GM12878 (cell line): ENCODE measurements at regions of chr11 and their contacts with region 1.

Region 1: DNA sequence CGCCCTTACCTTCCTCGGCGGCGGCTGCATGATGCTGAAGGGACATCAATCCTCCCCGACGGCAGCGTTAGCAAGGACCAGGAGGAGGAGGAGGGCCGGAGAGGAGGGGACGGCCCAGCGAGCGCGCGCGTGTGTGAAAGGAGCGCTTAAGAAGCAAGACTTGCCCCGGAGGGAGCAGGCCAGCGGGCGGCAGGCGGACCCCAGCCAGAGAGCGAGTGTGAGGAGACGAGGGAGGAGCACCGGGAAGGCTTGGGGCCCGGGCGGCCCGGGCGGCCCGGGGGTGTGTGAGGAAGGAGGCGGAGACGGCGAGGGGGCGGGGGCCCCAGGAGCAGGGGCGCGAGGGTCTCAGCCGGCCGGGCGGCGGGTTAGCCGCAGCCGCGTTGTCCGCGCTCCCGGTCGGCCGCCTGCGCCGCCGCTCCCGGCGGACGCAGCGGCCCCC is 251 bp downstream of the FCHSD2 start:
- DNase-seq: no peak
- ATAC-seq: peak; percentile 25
- H3K4me3 ChIP-seq: peak overlapping the region; percentile 90
- H3K27ac ChIP-seq: peak overlapping the region; percentile 99
- H3K4me1 ChIP-seq: peaks cover 36% of the 10 kb centered on the region
- H3K27me3 ChIP-seq: no peaks in the 10 kb centered on the region
- CTCF ChIP-seq: 0 out of 6 replicates have a peak, but pooled peaks of 1 of the 3 experiments have one; percentile 0
- EP300 ChIP-seq: no peak
- POLR2A ChIP-seq: peak; percentile 65
- RAD21 ChIP-seq: no peak

Region 2: DNA sequence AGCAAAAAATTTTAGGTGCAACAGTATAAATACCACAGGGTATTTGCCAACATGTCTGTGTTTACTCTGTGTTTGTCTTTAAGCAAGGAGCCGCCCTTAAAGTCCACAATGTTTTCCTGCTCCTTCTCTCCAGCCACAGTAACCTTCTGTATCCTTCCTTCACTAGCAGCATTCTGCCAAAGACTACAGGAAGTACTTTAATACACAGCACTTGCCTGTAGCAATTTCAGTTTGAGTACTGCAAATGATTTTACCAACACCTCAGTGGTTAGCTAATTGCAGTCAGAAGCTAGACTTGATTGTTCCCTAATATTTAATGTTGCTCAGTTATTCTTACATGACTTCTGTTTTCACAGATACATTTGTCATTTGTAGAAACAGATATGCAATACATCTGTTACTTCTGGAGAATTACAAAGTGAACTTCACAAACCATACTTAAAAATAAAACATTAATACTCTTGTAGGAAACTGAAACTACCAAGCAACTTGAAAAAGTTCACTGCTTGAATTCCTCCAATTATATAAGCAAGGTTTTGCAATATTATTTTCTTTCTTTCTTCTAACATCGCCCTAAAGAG is 68.9 kb before region 1 on chr11:
- CTCF ChIA-PET with region 1: interaction called, 3 read pairs
- POLR2A ChIA-PET with region 1: no interaction called
- RAD21 ChIA-PET with region 1: interaction called, 8 read pairs
- SMC1A ChIA-PET with region 1: interaction called, 5 read pairs
- in situ Hi-C with region 1: no loop called
- intact Hi-C with region 1: loop called (anchors 5 kb)
- DNase-seq: peak; percentile 72
- ATAC-seq: peak; percentile 89
- H3K4me3 ChIP-seq: peak overlapping the region; percentile 41
- H3K27ac ChIP-seq: peak overlapping the region; percentile 71
- H3K4me1 ChIP-seq: peaks cover 15% of the 10 kb centered on the region; the same call in 1 of the 2 replicates
- H3K27me3 ChIP-seq: no peaks in the 10 kb centered on the region
- CTCF ChIP-seq: no peak
- EP300 ChIP-seq: peak; percentile 65 to 70; a peak in 2 of 4 replicates
- POLR2A ChIP-seq: 0 out of 2 replicates have a peak, but pooled peaks have one; percentile 31
- RAD21 ChIP-seq: no peak

Region 3: DNA sequence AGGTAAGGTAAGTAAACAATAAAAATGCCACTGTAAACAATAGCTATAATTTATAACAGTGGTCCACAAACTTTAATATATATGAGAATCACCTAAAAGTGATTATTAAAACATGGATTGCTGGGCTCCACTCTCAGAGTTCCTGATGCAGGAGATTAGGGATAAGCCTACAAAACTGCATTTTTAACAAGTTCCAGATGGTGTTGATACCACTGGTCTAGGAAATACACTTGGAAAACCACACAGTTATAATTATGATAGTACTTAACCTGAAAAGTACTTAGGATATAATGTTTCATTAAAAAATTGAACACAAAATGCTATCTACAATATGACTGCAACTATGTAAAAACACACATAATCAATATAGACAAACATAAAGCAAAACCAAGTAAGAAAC is 20.2 kb before region 1 on chr11:
- CTCF ChIA-PET with region 1: interaction called, 16 read pairs
- POLR2A ChIA-PET with region 1: interaction called, 4 read pairs
- RAD21 ChIA-PET with region 1: interaction called, 4 read pairs
- SMC1A ChIA-PET with region 1: interaction called, 47 read pairs
- in situ Hi-C with region 1: no loop called
- intact Hi-C with region 1: no loop called
- DNase-seq: no peak
- ATAC-seq: no peak
- H3K4me3 ChIP-seq: no peak overlapping the region
- H3K27ac ChIP-seq: no peak overlapping the region
- H3K4me1 ChIP-seq: no peaks in the 10 kb centered on the region
- H3K27me3 ChIP-seq: no peaks in the 10 kb centered on the region
- CTCF ChIP-seq: no peak
- EP300 ChIP-seq: no peak
- POLR2A ChIP-seq: no peak
- RAD21 ChIP-seq: no peak

Region 4: DNA sequence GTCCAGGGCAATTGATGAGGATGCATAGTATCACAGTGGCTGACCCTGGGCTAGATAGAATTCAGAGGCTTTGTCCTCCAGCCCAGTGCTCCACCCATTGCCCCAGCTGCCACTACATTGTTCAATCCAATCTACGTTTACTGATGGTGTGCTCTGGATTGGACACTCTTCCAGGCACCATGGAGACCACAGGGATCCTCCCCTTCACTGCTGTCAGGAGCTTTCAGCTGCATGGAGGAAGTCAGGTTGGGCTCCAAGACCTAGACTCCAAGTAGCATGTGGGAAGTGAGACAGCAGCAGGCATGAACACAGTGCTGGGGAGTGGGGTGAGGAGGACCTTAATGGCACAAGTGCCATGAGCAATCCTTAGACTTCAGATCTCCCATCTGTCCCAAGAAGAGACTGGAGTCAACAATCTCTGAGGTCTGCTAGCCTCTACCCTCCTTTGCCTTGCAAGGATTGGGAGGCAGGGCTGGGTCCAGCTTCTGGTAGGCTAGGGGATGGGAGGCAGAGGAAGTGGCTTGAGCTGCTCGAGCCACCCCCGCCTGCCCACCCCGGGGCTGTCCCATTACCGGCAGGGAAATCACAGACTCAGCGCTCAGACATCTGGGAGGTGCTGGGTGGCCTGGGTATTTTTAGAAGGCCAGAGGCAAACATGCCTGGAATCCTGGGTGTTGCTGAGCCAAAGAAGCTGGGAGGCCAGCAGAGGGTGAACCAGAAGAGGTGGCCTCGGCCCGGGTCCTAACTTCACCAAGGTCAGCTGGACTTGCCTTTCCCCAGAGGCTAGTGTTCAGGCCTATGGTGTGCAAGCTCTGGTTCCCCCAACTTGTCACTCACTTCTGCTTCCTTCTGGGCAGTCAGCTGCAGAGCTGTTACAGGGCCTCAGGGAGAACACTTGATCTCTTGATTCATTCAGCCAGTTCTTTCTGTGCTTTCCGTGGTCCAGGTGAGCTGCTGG is 15.5 kb after region 1 on chr11:
- CTCF ChIA-PET with region 1: interaction called, 77 read pairs
- POLR2A ChIA-PET with region 1: interaction called, 384 read pairs
- RAD21 ChIA-PET with region 1: interaction called, 441 read pairs
- SMC1A ChIA-PET with region 1: interaction called, 926 read pairs
- in situ Hi-C with region 1: no loop called
- intact Hi-C with region 1: loop called (anchors 1 kb)
- DNase-seq: no peak
- ATAC-seq: peak; percentile 63
- H3K4me3 ChIP-seq: peak overlapping the region; percentile 69
- H3K27ac ChIP-seq: peak overlapping the region; percentile 98
- H3K4me1 ChIP-seq: peaks cover 71% of the 10 kb centered on the region
- H3K27me3 ChIP-seq: no peaks in the 10 kb centered on the region
- CTCF ChIP-seq: no peak
- EP300 ChIP-seq: peak in 1 of 2 experiments; percentile 59; a peak in 2 of 4 replicates
- POLR2A ChIP-seq: peak; percentile 67
- RAD21 ChIP-seq: no peak